ENCODE measurements at regions of chr15 and their contacts with region 1.

Region 1: DNA sequence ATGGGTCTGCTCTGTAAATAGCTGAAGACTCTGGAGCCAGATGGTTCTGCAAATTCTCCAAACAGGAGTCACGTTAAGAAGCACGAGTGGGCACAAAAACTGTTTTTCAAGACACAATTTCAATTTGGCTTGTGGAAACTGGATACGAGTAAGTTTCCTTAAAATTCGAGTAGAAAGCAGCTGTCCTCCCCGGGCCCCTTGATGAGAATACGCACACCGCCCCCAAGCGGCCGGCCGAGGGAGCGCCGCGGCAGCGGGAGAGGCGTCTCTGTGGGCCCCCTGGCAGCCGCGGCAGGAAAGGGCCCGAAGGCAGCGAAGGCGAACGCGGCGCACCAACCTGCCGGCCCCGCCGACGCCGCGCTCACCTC is 778 bp upstream of the THBS1 start:
- DNase-seq: peak; percentile 98
- H3K4me3 ChIP-seq: peak overlapping the region; percentile 61 to 90 (median 77)
- H3K27ac ChIP-seq: peak overlapping the region; percentile 87 to 96 (median 94)
- H3K4me1 ChIP-seq: peaks cover 21 to 60% (median 57%) of the 10 kb centered on the region in 4 donors
- H3K27me3 ChIP-seq: peaks cover 0 to 3% (median 0%) of the 10 kb centered on the region in 4 donors
- CTCF ChIP-seq: peak; percentile 99 to 100 (median 99)
- EP300 ChIP-seq: no peak
- POLR2A ChIP-seq: no peak

Region 2: GRCh38 chr15:38817427-38818156 is 762.5 kb before region 1 on chr15:
- intact Hi-C with region 1: loop called (anchors 2 kb)
- DNase-seq: peak; percentile 95
- H3K4me3 ChIP-seq: no peak overlapping the region
- H3K27ac ChIP-seq: peak overlapping the region in 3 of 4 donors; percentile 54 to 63 (median 57)
- H3K4me1 ChIP-seq: peaks cover 0 to 19% (median 15%) of the 10 kb centered on the region in 4 donors
- H3K27me3 ChIP-seq: no peaks in the 10 kb centered on the region
- CTCF ChIP-seq: peak; percentile 98 to 100 (median 99)
- EP300 ChIP-seq: no peak
- POLR2A ChIP-seq: no peak

Region 3: DNA sequence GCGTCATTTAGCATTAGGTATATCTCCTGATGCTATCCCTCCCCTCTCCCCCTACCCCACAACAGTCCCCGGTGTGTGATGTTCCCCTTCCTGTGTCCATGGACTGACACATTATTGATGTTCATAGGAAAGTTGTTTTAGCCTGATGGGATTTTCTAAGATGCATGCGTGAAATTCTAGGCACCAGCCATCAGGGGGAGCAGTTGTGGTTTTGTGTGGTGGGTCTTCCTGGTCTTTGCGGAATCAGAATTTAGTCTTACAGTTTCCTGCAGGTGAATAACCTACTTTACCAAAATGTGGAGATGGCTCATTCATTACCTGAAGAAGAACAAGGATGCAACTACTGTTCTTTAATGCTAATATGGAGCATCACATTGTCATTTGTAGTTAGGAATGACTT is 454.2 kb before region 1 on chr15:
- intact Hi-C with region 1: loop called (anchors 5 kb)
- DNase-seq: no peak
- H3K4me3 ChIP-seq: no peak overlapping the region
- H3K27ac ChIP-seq: no peak overlapping the region
- H3K4me1 ChIP-seq: peaks cover 21 to 43% (median 39%) of the 10 kb centered on the region in 4 donors
- H3K27me3 ChIP-seq: no peaks in the 10 kb centered on the region
- CTCF ChIP-seq: peak; percentile 50 to 64 (median 53)
- EP300 ChIP-seq: no peak
- POLR2A ChIP-seq: no peak

Region 4: DNA sequence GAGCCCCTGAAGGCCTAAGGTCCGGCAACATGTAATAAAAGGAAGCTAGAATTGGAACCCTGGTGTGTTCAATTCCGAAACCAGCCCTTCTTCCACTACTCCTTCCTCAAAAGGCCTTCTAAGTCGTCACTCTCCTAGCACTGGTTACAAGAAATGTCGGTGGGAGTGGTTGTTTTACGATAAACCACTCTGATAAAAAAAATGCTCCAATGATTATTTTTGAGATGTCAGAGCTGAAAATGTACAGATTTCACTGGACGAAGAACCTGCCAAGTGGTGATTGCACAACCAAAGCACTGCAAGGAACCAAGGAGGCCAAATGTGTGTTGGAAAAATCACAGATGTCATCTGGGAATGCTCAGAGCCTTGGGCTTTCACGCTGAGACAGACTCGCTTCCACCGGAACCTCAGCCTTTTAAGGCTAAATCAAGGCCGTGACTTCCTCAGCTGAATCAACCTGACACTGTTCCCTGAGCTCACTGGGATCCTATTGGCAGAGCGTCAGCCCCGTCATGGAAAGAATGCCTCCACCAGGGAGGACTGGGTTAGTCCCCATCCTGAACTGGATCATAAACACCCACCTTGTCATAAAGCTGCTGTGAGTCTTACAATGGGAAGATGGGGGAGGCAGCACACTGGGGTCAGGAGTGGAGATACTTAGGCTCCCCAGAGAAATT is 107.3 kb before region 1 on chr15:
- intact Hi-C with region 1: loop called (anchors 2 kb)
- DNase-seq: peak; percentile 98
- H3K4me3 ChIP-seq: peak overlapping the region in 1 of 4 donors; percentile 4
- H3K27ac ChIP-seq: peak overlapping the region; percentile 80 to 92 (median 87)
- H3K4me1 ChIP-seq: peaks cover 0 to 33% (median 31%) of the 10 kb centered on the region in 4 donors
- H3K27me3 ChIP-seq: no peaks in the 10 kb centered on the region
- CTCF ChIP-seq: no peak
- EP300 ChIP-seq: peak; percentile 93
- POLR2A ChIP-seq: no peak

Region 5: DNA sequence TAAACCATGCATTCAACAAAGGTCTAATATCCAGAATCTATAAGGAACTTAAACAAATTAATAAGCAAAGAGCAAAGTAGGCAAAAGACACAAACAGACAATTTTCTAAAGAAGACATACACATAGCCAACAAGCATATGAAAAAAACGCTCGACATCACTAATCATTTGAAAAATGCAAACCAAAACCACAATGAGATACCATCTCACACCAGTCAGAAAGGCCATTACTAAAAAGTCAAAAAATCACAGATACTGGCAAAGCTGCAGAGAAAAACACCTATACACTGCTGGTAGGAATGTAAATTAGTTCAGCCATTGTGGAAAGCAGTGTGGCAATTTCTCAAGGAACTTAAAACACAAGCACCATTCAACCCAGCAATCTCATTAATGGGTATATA is 148.7 kb after region 1 on chr15:
- intact Hi-C with region 1: no loop called
- DNase-seq: no peak
- H3K4me3 ChIP-seq: no peak overlapping the region
- H3K27ac ChIP-seq: no peak overlapping the region
- H3K4me1 ChIP-seq: peaks cover 0 to under 1% (median 0%) of the 10 kb centered on the region in 4 donors
- H3K27me3 ChIP-seq: no peaks in the 10 kb centered on the region
- CTCF ChIP-seq: no peak
- EP300 ChIP-seq: no peak
- POLR2A ChIP-seq: no peak

Region 6: DNA sequence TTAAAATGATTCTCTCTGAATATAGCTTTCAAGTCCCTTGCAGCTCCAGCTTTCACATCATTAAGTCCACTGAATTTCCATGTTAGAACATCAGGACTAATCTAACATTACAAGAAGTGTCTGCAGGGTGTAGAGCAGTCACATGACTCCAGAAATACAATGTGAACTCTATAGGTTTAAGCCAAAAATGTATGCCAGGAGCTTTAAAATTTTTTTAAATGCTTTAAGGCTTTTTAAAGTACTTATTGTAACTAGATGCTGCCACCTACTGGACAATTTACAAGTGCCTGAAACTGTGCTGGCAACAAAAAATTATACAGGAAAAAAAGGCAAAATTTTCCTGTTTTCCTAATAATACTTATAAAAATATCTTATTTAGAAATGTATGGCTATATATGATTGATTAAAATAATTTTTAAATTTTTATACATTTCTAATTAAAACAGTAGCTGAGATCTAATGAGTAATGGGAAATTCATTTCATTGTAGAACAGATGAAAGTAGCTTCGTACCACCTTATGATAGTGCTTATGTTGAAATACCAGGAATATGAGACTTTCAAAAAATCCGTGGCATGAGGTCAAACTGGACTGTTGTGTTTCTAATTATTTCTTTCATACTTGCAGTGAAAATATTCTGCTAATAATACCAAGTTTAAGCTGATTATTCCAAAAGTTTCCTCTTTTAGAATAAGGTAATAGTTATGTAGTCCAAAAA is 176.9 kb after region 1 on chr15:
- intact Hi-C with region 1: loop called (anchors 5 kb)
- DNase-seq: no peak
- H3K4me3 ChIP-seq: no peak overlapping the region
- H3K27ac ChIP-seq: no peak overlapping the region
- H3K4me1 ChIP-seq: peaks cover 0 to 29% (median 25%) of the 10 kb centered on the region in 4 donors
- H3K27me3 ChIP-seq: no peaks in the 10 kb centered on the region
- CTCF ChIP-seq: peak; percentile 78 to 90 (median 87)
- EP300 ChIP-seq: no peak
- POLR2A ChIP-seq: no peak